Calu3 (cell line): ENCODE measurements at regions of chr14 and their contacts with region 1.

Region 1: DNA sequence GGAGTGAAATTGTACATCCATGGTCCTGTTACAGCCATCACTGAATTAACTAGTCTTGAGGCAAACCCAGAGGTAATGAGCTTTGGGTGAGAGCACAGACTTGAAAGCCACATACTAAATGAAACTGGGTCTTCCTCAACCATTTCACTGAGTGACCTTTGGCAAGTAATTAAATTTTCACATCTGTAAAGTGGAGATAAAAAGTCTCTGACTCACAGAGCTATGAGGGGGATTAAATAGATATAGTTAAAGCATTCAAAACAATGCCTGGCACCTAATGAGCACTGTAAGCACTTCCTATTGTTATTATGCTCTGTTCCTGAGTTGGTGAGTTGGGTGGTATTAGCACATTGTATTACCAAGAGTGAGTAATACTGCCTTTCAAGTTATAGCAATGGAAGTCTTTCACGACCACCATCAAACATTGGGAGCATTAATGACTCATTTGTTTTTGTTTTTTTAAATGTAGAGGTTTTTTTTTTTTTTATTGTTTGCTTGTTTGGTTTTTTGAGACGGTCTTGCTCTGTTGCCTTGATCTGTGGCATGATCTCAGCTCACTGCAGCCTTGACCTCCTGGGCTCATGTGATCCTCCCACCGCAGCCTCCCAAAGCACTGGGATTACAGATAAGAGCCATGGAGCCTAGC is 12.5 kb upstream of the STRN3 start:
- DNase-seq: no peak
- H3K4me3 Mint-ChIP-seq: no peak overlapping the region
- H3K27ac Mint-ChIP-seq: no peak overlapping the region
- H3K4me1 Mint-ChIP-seq: peaks cover 28% of the 10 kb centered on the region
- H3K27me3 Mint-ChIP-seq: no peaks in the 10 kb centered on the region
- CTCF ChIP-seq: no peak

Region 2: GRCh38 chr14:30770376-30770775 is 268.3 kb before region 1 on chr14:
- CTCF ChIA-PET with region 1: no interaction called
- intact Hi-C with region 1: no loop called
- DNase-seq: no peak
- H3K4me3 Mint-ChIP-seq: no peak overlapping the region
- H3K27ac Mint-ChIP-seq: no peak overlapping the region
- H3K4me1 Mint-ChIP-seq: no peaks in the 10 kb centered on the region
- H3K27me3 Mint-ChIP-seq: peaks cover 59% of the 10 kb centered on the region
- CTCF ChIP-seq: no peak

Region 3: DNA sequence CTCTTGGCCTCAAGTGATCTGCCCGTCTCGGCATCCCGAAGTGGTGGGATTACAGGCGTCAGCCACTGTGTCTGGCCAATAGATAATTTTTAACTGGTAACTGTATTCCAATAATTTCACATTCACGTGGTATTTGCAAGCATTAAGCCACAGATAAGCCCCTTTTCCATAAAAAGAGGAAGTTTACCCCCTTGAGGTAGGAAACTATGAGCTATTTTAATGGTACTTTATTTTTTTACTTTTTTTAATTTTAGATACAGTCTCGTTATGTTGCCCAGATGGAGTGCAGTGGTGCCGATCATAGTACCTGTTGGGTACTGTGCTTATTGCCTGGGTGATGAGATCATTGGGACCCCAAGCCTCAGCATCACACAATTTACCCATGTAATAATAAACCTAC is 56.1 kb before region 1 on chr14:
- CTCF ChIA-PET with region 1: no interaction called
- intact Hi-C with region 1: no loop called
- DNase-seq: no peak
- H3K4me3 Mint-ChIP-seq: no peak overlapping the region
- H3K27ac Mint-ChIP-seq: no peak overlapping the region
- H3K4me1 Mint-ChIP-seq: peaks cover 17% of the 10 kb centered on the region
- H3K27me3 Mint-ChIP-seq: no peaks in the 10 kb centered on the region
- CTCF ChIP-seq: no peak

Region 4: DNA sequence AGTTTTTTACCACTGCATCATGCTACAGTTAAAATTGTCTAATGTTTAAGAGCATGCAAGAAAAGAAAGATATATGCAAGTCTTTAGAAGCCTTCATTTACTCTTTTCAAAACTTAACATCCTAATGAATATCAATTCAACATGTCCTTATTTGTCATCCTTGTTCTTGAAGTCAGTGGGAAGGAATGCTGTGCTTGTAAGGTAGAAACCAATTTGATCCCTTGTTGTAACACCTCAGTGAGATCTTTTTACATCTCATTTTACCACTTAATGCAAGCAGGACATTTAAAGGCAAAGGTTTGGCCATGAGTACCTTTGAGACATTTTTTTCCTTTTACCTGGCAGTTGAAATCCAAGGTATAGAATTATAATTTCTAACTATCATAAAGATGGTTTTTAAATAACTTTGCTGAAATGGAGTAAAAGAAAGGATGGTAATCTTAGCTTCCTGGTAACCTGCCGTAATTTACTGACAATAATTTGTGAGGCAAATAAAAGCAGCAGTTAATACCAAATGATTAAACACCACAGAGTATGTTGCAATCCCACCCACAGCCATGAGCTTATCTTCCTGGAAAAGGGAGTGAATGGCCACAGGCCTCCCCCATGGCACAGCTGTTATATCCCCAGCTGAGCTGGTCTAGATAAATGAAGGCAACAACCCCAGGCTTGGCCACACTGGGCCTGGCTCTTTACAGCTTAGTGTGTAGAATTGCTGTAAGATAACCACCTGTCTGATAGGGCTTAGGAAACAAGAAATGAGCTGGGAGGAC is 20.7 kb after region 1 on chr14:
- CTCF ChIA-PET with region 1: interaction called, 6 read pairs
- intact Hi-C with region 1: loop called (anchors 2 kb)
- DNase-seq: peak; percentile 57
- H3K4me3 Mint-ChIP-seq: no peak overlapping the region
- H3K27ac Mint-ChIP-seq: peak overlapping the region; percentile 95
- H3K4me1 Mint-ChIP-seq: peaks cover 28% of the 10 kb centered on the region
- H3K27me3 Mint-ChIP-seq: no peaks in the 10 kb centered on the region
- CTCF ChIP-seq: no peak

Region 5: DNA sequence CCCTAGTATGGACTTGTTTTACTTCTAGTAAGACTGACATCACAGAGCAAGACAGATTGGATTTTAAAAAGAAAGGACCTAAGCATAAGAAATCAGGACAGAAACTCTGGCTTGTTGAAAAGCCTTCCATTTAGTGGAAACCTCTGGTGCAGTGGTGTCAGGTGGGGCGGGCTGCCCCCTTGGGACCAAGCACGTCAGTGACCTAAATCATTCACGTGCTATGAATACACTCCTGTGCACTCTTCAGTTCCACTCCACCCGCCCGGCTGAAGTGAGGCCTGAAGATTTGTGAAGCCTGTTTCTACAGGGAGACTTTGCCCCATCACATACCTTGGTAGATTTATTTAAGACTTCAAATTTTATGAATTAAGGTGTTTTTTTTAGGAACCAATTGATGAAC is 45.7 kb after region 1 on chr14:
- CTCF ChIA-PET with region 1: no interaction called
- intact Hi-C with region 1: no loop called
- DNase-seq: no peak
- H3K4me3 Mint-ChIP-seq: no peak overlapping the region
- H3K27ac Mint-ChIP-seq: no peak overlapping the region
- H3K4me1 Mint-ChIP-seq: no peaks in the 10 kb centered on the region
- H3K27me3 Mint-ChIP-seq: no peaks in the 10 kb centered on the region
- CTCF ChIP-seq: no peak